Panc1 (cell line): ENCODE measurements at regions of chr6 and their contacts with region 1.

Region 1: GRCh38 chr6:135397172-135397952 is 100.2 kb downstream of the AHI1 start:
- DNase-seq: no peak
- ATAC-seq: no peak
- H3K4me3 ChIP-seq: no peak overlapping the region
- H3K27ac ChIP-seq: no peak overlapping the region
- H3K4me1 ChIP-seq: no peaks in the 10 kb centered on the region
- H3K27me3 ChIP-seq: no peaks in the 10 kb centered on the region
- CTCF ChIP-seq: no peak

Region 2: DNA sequence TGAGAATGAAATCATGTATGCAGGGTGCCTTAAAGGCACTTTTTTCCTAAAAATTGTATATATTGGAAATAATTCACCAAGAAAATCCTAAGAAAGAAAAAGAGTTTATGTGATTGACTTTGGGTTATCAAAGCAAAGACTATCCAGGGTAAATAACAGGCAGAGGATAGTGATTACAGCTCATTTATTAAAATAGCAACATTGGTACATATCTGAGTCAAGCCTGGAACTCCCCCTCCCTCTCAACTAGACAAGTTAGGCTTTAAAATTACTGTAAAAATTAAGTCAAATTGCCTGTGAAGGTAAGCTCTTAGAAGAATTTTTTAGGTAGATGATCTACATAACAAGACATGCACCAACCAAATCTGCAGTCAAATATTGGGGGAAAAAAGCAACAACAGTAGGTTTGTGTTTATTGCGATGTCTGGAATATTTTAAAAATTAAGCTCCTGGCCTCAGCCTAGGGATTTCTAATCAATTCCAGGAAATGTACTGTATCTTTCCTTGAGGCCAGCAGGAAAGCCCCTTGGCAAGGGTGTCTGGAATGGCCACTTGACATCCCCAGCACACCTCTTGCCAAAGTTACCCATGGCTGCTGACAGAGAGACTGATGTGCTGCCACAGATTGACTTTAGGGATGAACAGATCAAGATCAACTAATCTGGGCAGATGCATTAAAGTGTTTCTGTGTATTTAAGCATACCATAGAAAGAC is 311.5 kb before region 1 on chr6:
- CTCF ChIA-PET with region 1: no interaction called
- POLR2A ChIA-PET with region 1: no interaction called
- in situ Hi-C with region 1: no loop called
- intact Hi-C with region 1: no loop called
- DNase-seq: no peak
- ATAC-seq: no peak
- H3K4me3 ChIP-seq: no peak overlapping the region
- H3K27ac ChIP-seq: no peak overlapping the region
- H3K4me1 ChIP-seq: no peaks in the 10 kb centered on the region
- H3K27me3 ChIP-seq: peaks cover 6% of the 10 kb centered on the region; the same call in 1 of the 2 replicates
- CTCF ChIP-seq: no peak

Region 3: GRCh38 chr6:135212020-135212806 is 185.1 kb before region 1 on chr6:
- CTCF ChIA-PET with region 1: no interaction called
- POLR2A ChIA-PET with region 1: interaction called, 14 read pairs
- in situ Hi-C with region 1: no loop called
- intact Hi-C with region 1: no loop called
- DNase-seq: no peak
- ATAC-seq: no peak
- H3K4me3 ChIP-seq: no peak overlapping the region
- H3K27ac ChIP-seq: no peak overlapping the region
- H3K4me1 ChIP-seq: no peaks in the 10 kb centered on the region
- H3K27me3 ChIP-seq: peaks cover 2% of the 10 kb centered on the region; the same call in 1 of the 2 replicates
- CTCF ChIP-seq: no peak